ENCODE measurements at regions of chr2 and their contacts with region 1.

Region 1: GRCh38 chr2:112941753-112942658 is 31.0 kb downstream of the IL37 start:
- DNase-seq: peak; percentile 78 to 87 (median 85)
- H3K4me3 ChIP-seq: no peak overlapping the region
- H3K27ac ChIP-seq: no peak overlapping the region
- H3K4me1 ChIP-seq: peaks cover 0 to 13% (median 10%) of the 10 kb centered on the region in 4 experiments
- H3K27me3 ChIP-seq: no peaks in the 10 kb centered on the region

Region 2: DNA sequence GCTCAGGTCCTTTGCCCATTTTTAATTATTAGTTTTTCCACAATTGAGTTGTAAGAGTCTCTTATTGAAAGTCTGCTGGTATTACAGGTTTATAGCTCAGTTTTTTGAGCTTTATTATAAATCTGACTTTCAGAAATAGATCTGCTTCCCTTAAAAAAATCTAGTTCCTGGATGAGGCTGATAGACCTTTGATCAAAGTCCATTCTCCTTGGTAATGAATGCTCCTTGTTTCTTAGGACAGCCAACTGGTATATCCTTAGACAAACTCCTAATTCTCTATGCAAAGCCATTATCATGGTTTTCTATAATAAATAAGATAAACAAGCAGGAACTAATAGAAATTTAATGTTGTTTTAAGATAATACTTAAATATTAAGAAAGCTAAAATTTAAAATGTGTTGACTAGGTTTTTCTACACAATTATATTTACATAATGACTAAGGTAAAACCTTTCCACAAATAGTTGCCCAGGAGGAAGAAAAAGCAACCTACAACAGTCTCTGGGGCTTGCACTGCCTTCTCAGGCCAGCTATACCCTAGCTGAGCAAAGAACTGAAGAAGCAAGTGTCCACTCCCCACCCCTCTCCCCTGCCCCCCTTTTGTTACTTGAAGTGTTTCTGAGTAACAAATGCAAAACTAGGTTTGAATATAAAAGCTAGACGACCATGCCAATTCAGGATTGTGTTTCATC is 204.3 kb before region 1 on chr2:
- CTCF ChIA-PET with region 1: interaction called, 51 read pairs
- POLR2A ChIA-PET with region 1: no interaction called
- DNase-seq: no peak
- H3K4me3 ChIP-seq: no peak overlapping the region
- H3K27ac ChIP-seq: no peak overlapping the region
- H3K4me1 ChIP-seq: peaks cover 0 to 4% (median 0%) of the 10 kb centered on the region in 4 experiments
- H3K27me3 ChIP-seq: no peaks in the 10 kb centered on the region

Region 3: DNA sequence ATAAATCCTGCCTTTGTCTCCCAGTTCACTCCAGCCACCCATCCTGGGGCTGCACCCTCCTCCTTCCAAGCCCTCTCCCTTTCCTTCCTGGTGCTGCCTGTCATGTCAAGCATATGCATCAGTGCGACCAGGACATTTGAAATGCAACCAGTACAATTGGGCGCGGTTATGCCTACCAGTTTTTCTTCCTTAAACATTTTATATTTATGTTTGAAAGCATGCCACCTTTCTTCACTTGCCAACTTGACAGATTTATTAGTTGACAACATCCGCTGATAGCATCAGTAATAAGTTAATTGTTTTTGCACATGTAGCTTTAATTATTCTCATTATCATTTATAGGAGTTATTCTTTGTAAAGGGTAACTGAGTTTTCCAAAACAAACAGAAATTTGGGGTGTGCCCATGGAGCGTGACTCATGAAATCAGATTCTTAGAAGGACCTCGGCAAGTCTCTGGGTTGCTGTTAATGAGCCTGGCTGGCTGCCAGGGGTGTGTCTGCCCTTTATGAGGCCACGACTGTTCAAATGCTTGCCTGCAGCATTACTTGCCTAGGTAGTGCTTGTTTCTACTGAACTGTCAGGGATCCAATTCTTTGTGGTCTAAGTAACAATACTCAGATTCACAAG is 72.6 kb before region 1 on chr2:
- CTCF ChIA-PET with region 1: no interaction called
- POLR2A ChIA-PET with region 1: no interaction called
- DNase-seq: peak; percentile 83 to 95 (median 94)
- H3K4me3 ChIP-seq: peak overlapping the region in 2 of 7 experiments; percentile 25 to 26
- H3K27ac ChIP-seq: no peak overlapping the region
- H3K4me1 ChIP-seq: peaks cover 11 to 33% (median 31%) of the 10 kb centered on the region in 4 experiments
- H3K27me3 ChIP-seq: no peaks in the 10 kb centered on the region

Region 4: DNA sequence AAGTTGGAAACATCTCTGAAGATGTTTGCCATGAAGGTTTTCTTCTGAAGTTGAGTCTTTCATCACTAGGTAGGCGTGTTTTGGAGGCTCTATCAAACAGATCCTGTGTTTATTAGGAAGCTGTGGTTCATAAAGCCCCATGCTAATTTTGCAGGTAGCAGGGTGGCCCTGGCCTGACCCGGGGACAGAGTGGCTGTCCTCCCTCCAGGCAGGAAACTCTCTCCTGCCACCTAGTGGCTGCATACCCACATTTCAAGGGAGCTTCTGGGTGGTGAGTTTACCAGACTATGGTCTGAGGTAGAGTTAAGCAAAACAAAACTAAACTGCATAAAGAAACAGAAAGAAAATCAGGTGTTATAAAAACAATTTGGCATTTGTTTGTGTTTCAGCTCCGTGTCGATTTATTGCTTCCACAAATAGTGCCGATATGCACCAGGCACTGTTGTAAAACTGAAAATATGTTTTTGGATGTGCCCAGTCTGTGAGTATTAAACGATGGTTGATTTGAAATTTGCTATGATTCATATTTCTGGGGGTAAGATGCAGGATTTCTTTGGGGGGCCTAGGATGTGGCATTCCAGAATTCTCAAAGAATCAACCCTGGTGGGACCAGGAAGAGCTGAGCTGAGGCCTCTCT is 57.0 kb before region 1 on chr2:
- CTCF ChIA-PET with region 1: interaction called, 22 read pairs
- POLR2A ChIA-PET with region 1: no interaction called
- DNase-seq: peak; percentile 44 to 74 (median 70)
- H3K4me3 ChIP-seq: peak overlapping the region in 2 of 7 experiments; percentile 9 to 26
- H3K27ac ChIP-seq: no peak overlapping the region
- H3K4me1 ChIP-seq: peaks cover 11 to 58% (median 40%) of the 10 kb centered on the region in 4 experiments
- H3K27me3 ChIP-seq: no peaks in the 10 kb centered on the region

Region 5: DNA sequence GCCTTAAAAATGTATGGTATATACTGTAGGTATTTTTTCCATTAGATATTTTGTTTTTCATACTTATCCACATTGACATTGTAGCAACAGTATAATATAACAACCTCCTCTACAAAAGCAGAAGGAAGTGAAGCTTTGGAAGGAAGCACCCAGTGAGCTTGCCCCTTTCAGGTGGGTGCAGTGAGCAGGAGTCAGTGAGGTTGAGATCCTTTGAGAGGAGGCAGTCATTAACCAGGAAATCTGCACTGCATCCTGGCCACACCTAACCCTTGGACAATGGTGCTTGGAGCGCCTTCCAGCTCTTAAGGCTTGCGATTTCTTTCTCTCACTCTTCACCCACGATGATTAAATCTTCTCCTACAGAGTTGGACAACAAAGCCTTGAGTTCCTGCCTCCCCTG is 17.2 kb before region 1 on chr2:
- CTCF ChIA-PET with region 1: interaction called, 12 read pairs
- POLR2A ChIA-PET with region 1: interaction called, 3 read pairs
- DNase-seq: peak in 2 of 3 donors; percentile 48 to 60
- H3K4me3 ChIP-seq: no peak overlapping the region
- H3K27ac ChIP-seq: no peak overlapping the region
- H3K4me1 ChIP-seq: peaks cover 0 to 17% (median 9%) of the 10 kb centered on the region in 4 experiments
- H3K27me3 ChIP-seq: no peaks in the 10 kb centered on the region

Region 6: GRCh38 chr2:112954364-112954763 is 12.4 kb after region 1 on chr2:
- CTCF ChIA-PET with region 1: interaction called, 17 read pairs
- POLR2A ChIA-PET with region 1: interaction called, 3 read pairs
- DNase-seq: no peak
- H3K4me3 ChIP-seq: no peak overlapping the region
- H3K27ac ChIP-seq: no peak overlapping the region
- H3K4me1 ChIP-seq: peaks cover 0 to 3% (median 0%) of the 10 kb centered on the region in 4 experiments
- H3K27me3 ChIP-seq: no peaks in the 10 kb centered on the region

Region 7: GRCh38 chr2:113032737-113033136 is 90.7 kb after region 1 on chr2:
- CTCF ChIA-PET with region 1: no interaction called
- POLR2A ChIA-PET with region 1: no interaction called
- DNase-seq: no peak
- H3K4me3 ChIP-seq: no peak overlapping the region
- H3K27ac ChIP-seq: no peak overlapping the region
- H3K4me1 ChIP-seq: no peaks in the 10 kb centered on the region
- H3K27me3 ChIP-seq: peaks cover 0 to 11% (median 1%) of the 10 kb centered on the region in 5 experiments